HEK293 (cell line): ENCODE measurements at regions of chr1 and their contacts with region 1.

Region 1: DNA sequence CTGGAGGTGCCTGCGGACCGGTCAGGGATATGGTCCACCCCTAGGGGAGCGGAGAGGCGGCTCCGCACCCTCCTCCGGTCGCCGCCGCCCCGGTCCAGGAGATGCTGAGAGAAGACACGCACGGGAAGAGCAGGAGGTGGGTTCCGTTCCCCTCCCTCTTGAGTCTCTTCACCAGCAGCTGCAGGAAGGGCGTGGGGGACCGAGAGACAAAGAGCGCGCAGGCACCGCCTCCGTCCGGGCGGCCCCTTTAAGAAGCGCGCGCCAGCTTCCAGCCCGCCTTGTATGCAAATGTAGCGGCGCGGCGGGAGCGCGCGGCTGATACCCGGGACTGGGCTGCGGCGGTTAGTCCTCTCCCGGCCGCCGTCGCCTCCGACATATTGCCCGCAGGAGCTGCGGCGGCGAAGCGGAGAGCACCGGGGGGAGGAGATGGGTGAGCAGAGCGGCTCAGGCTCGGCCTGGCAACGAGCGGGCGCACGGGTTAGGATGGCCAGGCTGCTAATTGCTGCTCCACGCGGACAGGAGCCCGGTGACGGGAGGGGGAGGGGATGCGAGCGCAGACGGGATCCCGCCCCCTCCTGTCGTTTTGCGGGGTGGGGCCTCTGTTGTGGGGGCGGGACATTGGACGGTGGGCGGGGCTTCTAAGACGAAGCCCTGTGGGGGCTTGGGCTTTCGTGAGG is at the start of gene TMEM39B:
- H3K4me3 ChIP-seq: peak within 1 kb of the TSS; percentile 92
- H3K27ac ChIP-seq: peak within 1 kb of the TSS; percentile 62
- H3K4me1 ChIP-seq: no peaks in the 10 kb centered on the region
- CTCF ChIP-seq: peak; percentile 10; the same call in 1 of the 2 replicates

Region 2: GRCh38 chr1:32107742-32108661 is 35.2 kb after region 1 on chr1 and contains the start of gene KPNA6:
- CTCF ChIA-PET with region 1: interaction called, 12 read pairs
- POLR2A ChIA-PET with region 1: interaction called, 33 read pairs
- H3K4me3 ChIP-seq: peak within 1 kb of the TSS; percentile 94
- H3K27ac ChIP-seq: peak within 1 kb of the TSS; percentile 72
- H3K4me1 ChIP-seq: peaks cover 9% of the 10 kb centered on the region
- CTCF ChIP-seq: no peak